ENCODE measurements at regions of chr12 and their contacts with region 1.

Region 1: GRCh38 chr12:100741084-100741711 is 53.4 kb upstream of the ANO4 start:
- DNase-seq: peak; percentile 19 to 33 (median 28)
- ATAC-seq: peak; percentile 58
- H3K4me3 ChIP-seq: no peak overlapping the region
- H3K27ac ChIP-seq: no peak overlapping the region
- H3K4me1 ChIP-seq: no peaks in the 10 kb centered on the region
- H3K27me3 ChIP-seq: no peaks in the 10 kb centered on the region
- CTCF ChIP-seq: peak; percentile 33 to 70 (median 65); a peak in 5 of 6 replicates
- EP300 ChIP-seq: no peak
- POLR2A ChIP-seq: no peak
- RAD21 ChIP-seq: peak; percentile 23 to 55; a peak in 3 of 4 replicates

Region 2: GRCh38 chr12:100668945-100669536 is 72.2 kb before region 1 on chr12:
- CTCF ChIA-PET with region 1: no interaction called
- POLR2A ChIA-PET with region 1: no interaction called
- in situ Hi-C with region 1: no loop called
- intact Hi-C with region 1: loop called (anchors 1 kb)
- DNase-seq: peak; percentile 63 to 71 (median 66)
- ATAC-seq: peak; percentile 96
- H3K4me3 ChIP-seq: no peak overlapping the region
- H3K27ac ChIP-seq: no peak overlapping the region
- H3K4me1 ChIP-seq: no peaks in the 10 kb centered on the region
- H3K27me3 ChIP-seq: no peaks in the 10 kb centered on the region
- CTCF ChIP-seq: peak; percentile 76 to 89 (median 76)
- EP300 ChIP-seq: no peak
- POLR2A ChIP-seq: no peak
- RAD21 ChIP-seq: peak; percentile 40 to 56